ENCODE measurements at regions of chr4 and their contacts with region 1.

Region 1: DNA sequence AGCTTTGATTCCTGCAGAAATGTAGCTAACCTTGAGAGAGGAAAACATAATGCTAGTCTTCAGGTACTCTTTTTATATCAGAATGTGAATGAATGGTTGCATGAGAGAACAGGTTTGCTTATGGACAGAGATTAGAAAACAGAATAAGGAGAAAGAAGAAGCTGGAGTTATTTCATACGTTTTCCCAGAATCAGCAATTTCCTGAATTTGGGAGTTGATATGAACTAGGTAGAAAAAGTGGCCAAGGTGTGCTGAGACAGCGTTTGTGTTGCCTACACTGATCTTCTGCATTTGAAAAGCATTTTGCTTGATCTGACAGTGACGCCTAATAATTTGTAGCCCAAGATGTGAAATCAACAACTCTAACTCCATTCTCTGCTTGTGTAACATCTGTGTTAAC is 12.5 kb downstream of the GABRB1 start:
- DNase-seq: no peak
- H3K4me3 ChIP-seq: no peak overlapping the region
- H3K27ac ChIP-seq: no peak overlapping the region
- H3K4me1 ChIP-seq: no peaks in the 10 kb centered on the region
- H3K27me3 ChIP-seq: no peaks in the 10 kb centered on the region
- CTCF ChIP-seq: no peak
- POLR2A ChIP-seq: no peak

Region 2: DNA sequence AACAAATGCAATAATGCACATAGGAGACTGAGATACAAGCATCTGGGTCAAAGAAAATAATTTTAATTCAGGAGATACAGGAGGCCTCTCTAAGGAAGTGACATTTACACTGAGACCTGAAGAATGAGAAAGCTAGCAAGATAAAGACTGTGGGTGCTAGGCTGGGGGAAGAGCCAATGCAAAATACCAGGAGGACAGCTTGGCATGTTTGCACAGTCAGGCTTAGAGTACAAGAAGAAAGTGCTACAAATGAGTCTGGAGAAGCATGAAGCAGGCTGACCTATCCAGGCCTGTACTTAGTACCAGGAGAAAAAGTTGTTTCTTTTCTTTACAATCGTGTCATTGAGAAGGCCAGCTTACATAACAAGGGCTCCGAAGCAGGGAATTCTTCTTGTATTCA is 44.5 kb after region 1 on chr4:
- intact Hi-C with region 1: loop called (anchors 2 kb)
- DNase-seq: no peak
- H3K4me3 ChIP-seq: no peak overlapping the region
- H3K27ac ChIP-seq: no peak overlapping the region
- H3K4me1 ChIP-seq: no peaks in the 10 kb centered on the region
- H3K27me3 ChIP-seq: no peaks in the 10 kb centered on the region
- CTCF ChIP-seq: no peak
- POLR2A ChIP-seq: no peak

Region 3: GRCh38 chr4:47251348-47252135 is 207.7 kb after region 1 on chr4:
- intact Hi-C with region 1: no loop called
- DNase-seq: no peak
- H3K4me3 ChIP-seq: no peak overlapping the region
- H3K27ac ChIP-seq: no peak overlapping the region
- H3K4me1 ChIP-seq: no peaks in the 10 kb centered on the region
- H3K27me3 ChIP-seq: no peaks in the 10 kb centered on the region
- CTCF ChIP-seq: no peak
- POLR2A ChIP-seq: no peak

Measured in breast epithelium (tissue), 4 donors.